Endothelial cell of umbilical vein (primary cell): ENCODE measurements at regions of chr5 and their contacts with region 1.

Region 1: DNA sequence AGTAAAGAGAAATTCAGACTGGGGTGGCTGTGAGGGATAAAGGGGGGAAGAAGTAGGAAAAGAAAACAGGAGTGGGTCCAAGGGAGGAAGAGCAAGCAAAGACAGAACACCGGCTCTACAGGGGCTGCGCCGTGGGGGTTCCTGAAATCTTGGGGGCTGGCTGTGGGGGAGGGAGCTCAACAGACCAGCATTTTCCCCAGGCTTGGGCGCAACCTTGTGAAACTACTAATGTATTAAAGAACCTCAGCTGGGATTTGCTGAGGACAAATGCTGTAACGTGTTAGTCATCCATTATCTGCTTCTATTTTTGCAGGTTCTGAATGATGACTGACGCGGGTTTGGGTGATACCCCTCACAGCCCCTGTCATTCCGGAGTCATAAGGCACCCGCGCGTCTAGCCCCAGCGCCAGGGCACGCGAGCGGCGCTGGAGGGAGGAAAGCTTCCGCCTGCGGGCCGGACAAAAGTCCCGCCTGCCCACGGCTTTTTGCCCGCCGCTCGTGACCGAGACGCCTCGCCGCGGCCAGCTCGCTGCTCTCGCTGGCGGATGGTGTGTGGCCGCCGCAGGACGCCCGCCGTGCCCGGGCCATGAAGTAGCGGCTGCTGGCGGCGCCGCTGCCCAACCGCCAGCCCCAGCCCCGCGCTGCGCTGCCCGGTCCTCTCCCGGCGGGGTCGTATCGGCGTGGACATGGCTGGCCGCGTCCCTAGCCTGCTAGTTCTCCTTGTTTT is 110.6 kb downstream of the PAM start:
- DNase-seq: peak; percentile 80
- H3K4me3 ChIP-seq: peak overlapping the region; percentile 55 to 88 (median 60)
- H3K27ac ChIP-seq: peak overlapping the region; percentile 72
- H3K4me1 ChIP-seq: peaks cover 34% of the 10 kb centered on the region
- H3K27me3 ChIP-seq: no peaks in the 10 kb centered on the region
- CTCF ChIP-seq: no peak
- POLR2A ChIP-seq: peak; percentile 50

Region 2: GRCh38 chr5:102523541-102524175 is 342.0 kb before region 1 on chr5:
- CTCF ChIA-PET with region 1: no interaction called
- POLR2A ChIA-PET with region 1: no interaction called
- dilution Hi-C with region 1: no loop called
- intact Hi-C with region 1: no loop called
- DNase-seq: no peak
- H3K4me3 ChIP-seq: no peak overlapping the region
- H3K27ac ChIP-seq: no peak overlapping the region
- H3K4me1 ChIP-seq: no peaks in the 10 kb centered on the region
- H3K27me3 ChIP-seq: peaks cover 0 to 2% of the 10 kb centered on the region in 2 experiments
- CTCF ChIP-seq: no peak
- POLR2A ChIP-seq: no peak

Region 3: GRCh38 chr5:102832445-102832844 is 33.2 kb before region 1 on chr5:
- CTCF ChIA-PET with region 1: interaction called, 15 read pairs
- POLR2A ChIA-PET with region 1: no interaction called
- dilution Hi-C with region 1: no loop called
- intact Hi-C with region 1: no loop called
- DNase-seq: no peak
- H3K4me3 ChIP-seq: no peak overlapping the region
- H3K27ac ChIP-seq: no peak overlapping the region
- H3K4me1 ChIP-seq: peaks cover 5% of the 10 kb centered on the region
- H3K27me3 ChIP-seq: no peaks in the 10 kb centered on the region
- CTCF ChIP-seq: no peak
- POLR2A ChIP-seq: no peak

Region 4: GRCh38 chr5:102911973-102912372 is 46.3 kb after region 1 on chr5:
- CTCF ChIA-PET with region 1: interaction called, 5 read pairs
- POLR2A ChIA-PET with region 1: no interaction called
- dilution Hi-C with region 1: no loop called
- intact Hi-C with region 1: loop called (anchors 2 kb)
- DNase-seq: peak; percentile 89
- H3K4me3 ChIP-seq: no peak overlapping the region
- H3K27ac ChIP-seq: peak overlapping the region; percentile 63
- H3K4me1 ChIP-seq: peaks cover 29% of the 10 kb centered on the region
- H3K27me3 ChIP-seq: no peaks in the 10 kb centered on the region
- CTCF ChIP-seq: no peak
- POLR2A ChIP-seq: peak; percentile 48

Region 5: GRCh38 chr5:103041071-103041676 is 175.5 kb after region 1 on chr5:
- CTCF ChIA-PET with region 1: no interaction called
- POLR2A ChIA-PET with region 1: no interaction called
- dilution Hi-C with region 1: no loop called
- intact Hi-C with region 1: loop called (anchors 5 kb)
- DNase-seq: peak; percentile 71
- H3K4me3 ChIP-seq: no peak overlapping the region
- H3K27ac ChIP-seq: no peak overlapping the region
- H3K4me1 ChIP-seq: no peaks in the 10 kb centered on the region
- H3K27me3 ChIP-seq: no peaks in the 10 kb centered on the region
- CTCF ChIP-seq: peak; percentile 8 to 30
- POLR2A ChIP-seq: no peak